ENCODE measurements at regions of chr15 and their contacts with region 1.

Region 1: DNA sequence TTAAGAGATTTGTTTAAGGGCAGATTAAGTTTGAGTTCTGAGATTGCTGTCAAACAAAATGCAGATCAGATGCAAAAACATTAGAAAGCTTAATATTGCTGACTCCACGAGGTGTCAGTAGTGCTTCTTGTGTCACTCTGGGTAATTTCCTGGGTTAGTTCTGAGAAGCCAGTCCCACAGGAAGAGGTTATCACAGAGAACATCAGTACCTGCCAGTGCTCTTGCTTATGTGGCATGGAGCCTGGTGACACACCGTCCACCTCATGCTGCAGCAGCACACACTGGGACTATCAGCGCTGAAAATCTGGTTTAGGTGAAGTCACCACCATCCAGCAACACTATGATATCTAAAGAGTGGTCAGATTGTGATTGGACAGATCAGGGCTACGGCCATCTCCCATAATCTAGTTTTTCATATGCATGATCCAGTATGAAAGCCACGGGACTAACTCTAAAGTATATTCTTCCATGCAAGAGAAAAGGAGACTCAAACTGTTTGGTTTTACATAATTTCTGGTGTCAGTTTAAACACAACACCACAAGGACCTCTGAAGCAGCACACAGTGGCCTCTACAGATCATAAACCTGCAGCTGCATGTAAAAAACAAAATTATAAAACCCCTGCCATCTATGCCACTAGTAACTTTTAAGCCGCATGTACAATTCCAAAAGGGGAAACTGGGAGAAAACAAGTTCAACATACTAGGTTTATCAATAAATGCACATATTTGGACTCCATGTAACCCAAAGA is 36.1 kb upstream of the MYO5C start:
- DNase-seq: peak; percentile 89
- H3K4me3 ChIP-seq: peak overlapping the region; percentile 24
- H3K27ac ChIP-seq: peak overlapping the region; percentile 18
- H3K4me1 ChIP-seq: peaks cover 20% of the 10 kb centered on the region
- CTCF ChIP-seq: peak; percentile 89

Region 2: GRCh38 chr15:52246686-52247431 is 84.8 kb before region 1 on chr15:
- CTCF ChIA-PET with region 1: no interaction called
- POLR2A ChIA-PET with region 1: interaction called, 10 read pairs
- intact Hi-C with region 1: no loop called
- DNase-seq: no peak
- H3K4me3 ChIP-seq: no peak overlapping the region
- H3K27ac ChIP-seq: no peak overlapping the region
- H3K4me1 ChIP-seq: peaks cover 6% of the 10 kb centered on the region
- CTCF ChIP-seq: no peak

Region 3: GRCh38 chr15:52362502-52362901 is 30.8 kb after region 1 on chr15:
- CTCF ChIA-PET with region 1: no interaction called
- POLR2A ChIA-PET with region 1: interaction called, 11 read pairs
- intact Hi-C with region 1: no loop called
- DNase-seq: no peak
- H3K4me3 ChIP-seq: no peak overlapping the region
- H3K27ac ChIP-seq: no peak overlapping the region
- H3K4me1 ChIP-seq: no peaks in the 10 kb centered on the region
- CTCF ChIP-seq: no peak

Region 4: DNA sequence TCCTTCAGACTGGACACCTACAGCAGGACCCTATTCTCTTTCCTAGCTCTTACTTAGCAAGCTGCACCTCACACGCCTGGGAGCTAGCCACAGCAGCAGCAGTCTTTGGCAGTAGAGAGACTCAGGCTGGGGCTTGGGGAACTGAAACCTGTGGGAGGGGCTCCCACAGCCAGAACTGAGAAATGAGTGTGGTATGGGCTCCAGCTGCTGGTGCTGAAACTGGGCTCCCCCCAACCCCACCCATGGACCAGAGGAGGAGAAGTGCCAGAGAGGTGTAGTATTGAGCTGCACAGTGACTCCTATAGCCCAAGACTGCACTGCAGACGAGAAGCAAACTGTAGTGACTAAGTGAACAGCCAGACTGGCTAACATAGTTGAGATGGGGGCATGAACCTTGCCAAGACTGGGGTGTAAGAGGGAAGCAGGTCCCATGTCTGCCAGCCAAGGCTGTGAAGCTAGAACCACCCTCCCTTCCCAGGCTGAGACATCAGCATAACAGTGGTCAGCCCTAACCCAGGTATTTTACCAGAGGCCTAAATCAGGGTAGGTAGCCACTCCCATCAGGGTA is 134.6 kb after region 1 on chr15:
- CTCF ChIA-PET with region 1: no interaction called
- POLR2A ChIA-PET with region 1: interaction called, 3 read pairs
- intact Hi-C with region 1: loop called (anchors 1 kb)
- DNase-seq: peak; percentile 97
- H3K4me3 ChIP-seq: peak overlapping the region; percentile 51
- H3K27ac ChIP-seq: peak overlapping the region; percentile 81
- H3K4me1 ChIP-seq: peaks cover 53% of the 10 kb centered on the region
- CTCF ChIP-seq: peak; percentile 78

Region 5: GRCh38 chr15:52568601-52569256 is 237.1 kb after region 1 on chr15 and contains the start of gene ARPP19:
- CTCF ChIA-PET with region 1: no interaction called
- POLR2A ChIA-PET with region 1: interaction called, 4 read pairs
- intact Hi-C with region 1: loop called (anchors 1 kb)
- DNase-seq: peak; percentile 90
- H3K4me3 ChIP-seq: peak within 1 kb of the TSS; percentile 85
- H3K27ac ChIP-seq: peak within 1 kb of the TSS; percentile 75
- H3K4me1 ChIP-seq: peaks cover 30% of the 10 kb centered on the region
- CTCF ChIP-seq: peak; percentile 58
- total RNA-seq, gene ARPP19: 48.0 and 68.3 TPM in 2 replicates

Region 6: DNA sequence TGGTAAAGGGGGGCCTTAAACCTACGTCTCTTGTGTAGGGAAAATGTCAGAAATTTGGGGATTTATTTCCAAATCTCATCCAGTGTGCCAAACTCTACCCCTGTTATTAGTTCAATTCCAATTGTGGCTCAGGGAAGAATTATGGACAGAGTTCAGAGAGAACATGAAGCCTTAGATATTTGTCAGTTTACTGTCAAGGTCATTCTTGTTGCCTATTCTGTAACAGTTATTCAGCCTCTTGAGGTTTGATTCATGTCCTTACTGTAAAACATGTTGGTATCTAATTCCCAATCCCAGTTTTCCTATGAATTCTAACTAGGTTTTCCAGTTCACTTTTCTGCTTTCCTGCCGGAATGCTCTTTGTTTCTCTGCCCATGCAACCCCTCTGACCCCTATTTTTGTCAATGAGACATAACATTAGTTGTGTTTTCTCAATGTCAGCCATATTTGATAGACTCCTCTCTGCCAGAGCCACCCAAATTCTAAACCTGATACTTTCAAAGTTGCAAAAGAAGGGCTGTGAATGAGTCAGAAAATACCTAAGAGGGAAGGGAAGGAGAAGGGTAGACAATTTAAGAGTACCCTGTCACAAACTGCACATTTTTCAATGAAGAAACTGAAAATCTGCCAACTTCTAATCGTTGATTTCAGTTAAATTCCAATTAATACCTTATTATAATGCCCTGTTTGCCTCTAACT is 295.2 kb after region 1 on chr15:
- CTCF ChIA-PET with region 1: no interaction called
- POLR2A ChIA-PET with region 1: no interaction called
- intact Hi-C with region 1: no loop called
- DNase-seq: no peak
- H3K4me3 ChIP-seq: no peak overlapping the region
- H3K27ac ChIP-seq: no peak overlapping the region
- H3K4me1 ChIP-seq: peaks cover 8% of the 10 kb centered on the region
- CTCF ChIP-seq: no peak

Region 7: GRCh38 chr15:52730173-52730572 is 398.5 kb after region 1 on chr15:
- CTCF ChIA-PET with region 1: no interaction called
- POLR2A ChIA-PET with region 1: interaction called, 3 read pairs
- intact Hi-C with region 1: loop called (anchors 1 kb)
- DNase-seq: peak; percentile 95
- H3K4me3 ChIP-seq: no peak overlapping the region
- H3K27ac ChIP-seq: peak overlapping the region; percentile 65
- H3K4me1 ChIP-seq: peaks cover 65% of the 10 kb centered on the region
- CTCF ChIP-seq: peak; percentile 76

Region 8: DNA sequence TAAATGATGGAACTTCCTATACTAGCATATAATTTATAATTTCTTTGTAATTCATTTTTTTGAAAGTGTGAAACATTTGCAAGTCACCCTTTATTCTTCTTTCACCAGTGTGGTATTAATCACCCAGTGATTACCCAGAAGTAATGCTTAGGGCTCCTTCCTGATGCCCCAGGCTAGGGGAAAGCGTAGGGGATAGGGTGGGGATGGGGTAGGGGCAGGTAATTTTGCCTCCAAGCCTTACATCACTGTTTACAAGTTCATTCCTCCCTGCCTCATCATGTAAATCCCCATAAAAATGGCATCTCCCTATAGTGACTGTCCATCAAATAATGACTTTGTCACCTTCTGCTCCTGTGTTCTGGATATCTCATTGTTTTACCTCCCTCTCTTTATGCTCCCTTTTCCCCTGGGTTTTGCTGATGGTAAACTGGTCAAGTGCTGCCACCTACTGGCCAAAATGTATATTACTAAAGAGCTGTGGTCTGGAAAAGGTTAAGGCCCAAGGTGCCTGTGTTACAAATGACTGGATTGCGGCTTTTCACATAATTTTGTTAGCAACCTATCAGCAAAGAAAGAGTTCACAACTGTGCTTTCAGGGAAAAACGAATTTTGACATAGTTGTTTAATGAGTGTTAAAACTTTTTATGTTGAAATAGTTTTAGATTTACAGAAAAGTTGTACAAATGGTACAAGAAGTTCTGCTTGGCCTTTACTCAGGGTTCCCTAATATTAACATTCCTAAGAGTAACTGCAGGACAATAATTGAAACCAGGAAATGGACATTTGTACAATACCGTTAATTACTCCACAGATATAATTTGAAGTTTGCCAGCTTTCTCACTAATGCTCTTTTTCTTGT is 403.8 kb after region 1 on chr15:
- CTCF ChIA-PET with region 1: no interaction called
- POLR2A ChIA-PET with region 1: interaction called, 3 read pairs
- intact Hi-C with region 1: loop called (anchors 1 kb)
- DNase-seq: peak; percentile 86
- H3K4me3 ChIP-seq: no peak overlapping the region
- H3K27ac ChIP-seq: no peak overlapping the region
- H3K4me1 ChIP-seq: peaks cover 31% of the 10 kb centered on the region
- CTCF ChIP-seq: peak; percentile 98

Measured in OCI-LY7 (cell line).